Testis (tissue), 5 donors: ENCODE measurements at regions of chr14 and their contacts with region 1.

Region 1: DNA sequence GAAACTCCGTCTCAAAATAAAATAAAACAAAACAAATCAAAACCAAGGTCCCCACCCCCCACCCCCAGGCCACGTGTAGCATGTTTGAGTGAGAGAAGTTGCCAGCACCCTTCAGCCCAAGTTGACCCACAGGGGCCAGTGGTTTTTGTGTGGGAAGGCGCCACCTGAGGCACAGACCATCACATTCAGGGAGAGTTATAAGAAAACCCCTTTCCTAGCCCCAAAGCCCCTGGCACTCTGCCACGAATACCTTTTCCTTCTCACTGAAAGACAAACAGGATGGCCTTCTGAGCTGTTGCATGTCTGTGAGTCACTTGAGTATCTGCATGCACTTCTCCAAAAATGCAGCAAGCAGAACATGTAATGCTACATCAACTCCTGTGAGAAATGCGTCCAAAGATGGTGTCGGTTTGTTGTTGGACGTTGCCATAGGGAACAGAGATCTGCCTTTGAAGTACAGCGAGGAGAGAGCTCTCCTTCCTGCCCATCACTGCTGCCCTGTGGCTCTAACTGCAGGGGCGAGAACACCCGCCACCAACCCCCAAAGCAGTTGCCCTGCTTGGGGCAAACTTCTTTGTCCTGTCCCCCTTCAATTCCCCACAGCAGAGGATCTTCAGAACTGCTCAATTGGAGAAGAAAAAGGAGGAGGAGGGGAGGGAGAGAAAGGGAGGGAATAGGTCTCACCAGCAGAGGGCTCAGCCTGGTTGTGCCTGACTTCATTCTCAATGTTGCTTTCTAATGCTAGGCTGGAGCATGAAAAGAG is 2.7 kb upstream of the TRAF3 start:
- DNase-seq: peak; percentile 75
- H3K4me3 ChIP-seq: no peak overlapping the region
- H3K27ac ChIP-seq: peak overlapping the region in 1 of 2 donors; percentile 8
- H3K4me1 ChIP-seq: peaks cover 14% of the 10 kb centered on the region
- H3K27me3 ChIP-seq: no peaks in the 10 kb centered on the region
- CTCF ChIP-seq: peak; percentile 51 to 68 (median 63)
- POLR2A ChIP-seq: no peak

Region 2: GRCh38 chr14:102928412-102929240 is 154.1 kb after region 1 on chr14:
- intact Hi-C with region 1: loop called (anchors 10 kb)
- DNase-seq: peak; percentile 66
- H3K4me3 ChIP-seq: peak overlapping the region; percentile 29 to 47
- H3K27ac ChIP-seq: no peak overlapping the region
- H3K4me1 ChIP-seq: peaks cover 16% of the 10 kb centered on the region
- H3K27me3 ChIP-seq: no peaks in the 10 kb centered on the region
- CTCF ChIP-seq: no peak
- POLR2A ChIP-seq: no peak